K562 (cell line): ENCODE measurements at regions of chr19 and their contacts with region 1.

Region 1: DNA sequence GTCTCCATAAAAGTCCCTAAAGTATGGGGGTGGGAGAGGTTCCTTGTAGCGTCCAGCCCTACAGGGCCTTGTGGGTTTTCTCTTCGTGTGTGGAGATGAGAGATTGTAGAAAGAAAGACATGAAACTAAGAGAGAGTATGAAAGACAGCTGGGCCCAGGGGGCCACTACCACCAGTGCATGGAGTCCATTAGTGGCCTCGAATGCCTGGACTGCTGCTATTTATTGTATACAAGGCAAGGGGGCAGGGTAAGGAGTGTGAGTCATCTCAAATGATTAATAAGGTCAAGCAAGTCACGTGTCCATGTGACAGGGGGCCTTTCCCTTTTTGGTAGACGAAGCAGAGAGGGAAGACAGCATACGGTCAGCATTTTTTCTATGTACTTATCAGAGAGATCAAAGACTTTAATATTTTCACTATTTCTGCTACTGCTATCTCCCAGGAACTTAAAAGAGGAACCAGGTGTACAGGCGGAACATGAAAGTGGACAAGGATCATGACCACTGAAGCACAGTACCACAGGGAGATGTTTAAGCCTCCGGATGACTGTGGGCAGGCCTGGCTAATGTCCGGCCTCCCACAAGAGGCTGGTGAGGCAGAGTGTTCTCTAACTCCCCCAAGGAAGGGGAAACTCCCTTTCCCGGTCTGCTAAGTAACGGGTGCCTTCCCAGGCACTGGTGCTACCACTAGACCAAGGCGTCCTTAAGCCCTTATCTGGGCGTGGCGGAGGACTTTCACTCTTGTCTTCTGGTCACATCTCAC is 25.5 kb downstream of the FGF21 start:
- DNase-seq: peak; percentile 31 to 86 (median 39)
- ATAC-seq: peak; percentile 76
- H3K4me3 ChIP-seq: no peak overlapping the region
- H3K27ac ChIP-seq: peak overlapping the region; percentile 89
- H3K4me1 ChIP-seq: peaks cover 24 to 34% of the 10 kb centered on the region in 2 experiments
- H3K27me3 ChIP-seq: no peaks in the 10 kb centered on the region
- CTCF ChIP-seq: no peak
- EP300 ChIP-seq: peak; percentile 32; the same call in 1 of the 2 replicates
- POLR2A ChIP-seq: peak; percentile 48
- RAD21 ChIP-seq: no peak

Region 2: DNA sequence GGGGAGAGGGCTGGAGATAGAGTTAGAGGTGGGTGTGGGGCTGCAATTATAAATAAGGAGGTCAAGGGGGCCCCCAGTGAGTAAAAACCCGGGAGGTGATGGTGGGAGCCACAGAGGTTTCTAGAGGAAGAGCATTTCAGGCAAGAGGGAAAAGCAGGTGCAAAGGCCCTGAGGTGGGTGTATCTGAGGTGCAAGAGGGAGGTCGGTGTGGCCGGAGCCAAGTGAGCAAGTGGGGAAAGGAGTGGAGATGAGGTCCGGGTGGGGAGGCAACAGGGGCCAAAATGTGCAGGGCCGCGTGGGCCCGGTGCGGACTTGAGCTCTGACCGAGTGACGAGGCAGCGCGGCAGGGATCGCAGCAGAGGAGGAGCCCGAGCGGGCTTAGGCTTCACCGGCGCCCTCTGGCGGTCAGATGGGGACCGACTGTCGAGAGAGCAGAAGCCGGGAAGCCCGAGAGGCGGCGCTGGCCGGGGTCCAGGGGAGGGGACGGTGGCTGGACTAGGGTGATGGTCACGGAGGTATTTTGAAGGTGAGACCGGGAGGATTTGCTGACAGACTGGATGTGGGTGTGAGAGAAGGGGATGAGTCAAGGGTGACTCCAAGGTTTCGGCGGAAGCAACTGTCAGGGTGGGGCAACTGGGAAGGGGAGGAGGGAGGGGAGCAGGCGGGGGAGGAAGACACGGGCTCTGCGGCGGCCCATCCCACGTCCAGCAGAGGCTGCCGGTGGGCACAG is 192.0 kb before region 1 on chr19:
- CTCF ChIA-PET with region 1: no interaction called
- POLR2A ChIA-PET with region 1: no interaction called
- in situ Hi-C with region 1: no loop called
- intact Hi-C with region 1: loop called (anchors 5 kb)
- DNase-seq: peak; percentile 93 to 96 (median 94)
- ATAC-seq: peak; percentile 92
- H3K4me3 ChIP-seq: peak overlapping the region; percentile 37
- H3K27ac ChIP-seq: peak overlapping the region; percentile 70; the same call in 2 of the 3 replicates
- H3K4me1 ChIP-seq: peaks cover 3 to 30% of the 10 kb centered on the region in 2 experiments; a peak in 2 of 5 replicates
- H3K27me3 ChIP-seq: no peaks in the 10 kb centered on the region
- CTCF ChIP-seq: peak; percentile 98 to 99 (median 99)
- EP300 ChIP-seq: no peak; the same call in none of the 2 replicates
- POLR2A ChIP-seq: peak; percentile 60
- RAD21 ChIP-seq: peak; percentile 60 to 77

Region 3: DNA sequence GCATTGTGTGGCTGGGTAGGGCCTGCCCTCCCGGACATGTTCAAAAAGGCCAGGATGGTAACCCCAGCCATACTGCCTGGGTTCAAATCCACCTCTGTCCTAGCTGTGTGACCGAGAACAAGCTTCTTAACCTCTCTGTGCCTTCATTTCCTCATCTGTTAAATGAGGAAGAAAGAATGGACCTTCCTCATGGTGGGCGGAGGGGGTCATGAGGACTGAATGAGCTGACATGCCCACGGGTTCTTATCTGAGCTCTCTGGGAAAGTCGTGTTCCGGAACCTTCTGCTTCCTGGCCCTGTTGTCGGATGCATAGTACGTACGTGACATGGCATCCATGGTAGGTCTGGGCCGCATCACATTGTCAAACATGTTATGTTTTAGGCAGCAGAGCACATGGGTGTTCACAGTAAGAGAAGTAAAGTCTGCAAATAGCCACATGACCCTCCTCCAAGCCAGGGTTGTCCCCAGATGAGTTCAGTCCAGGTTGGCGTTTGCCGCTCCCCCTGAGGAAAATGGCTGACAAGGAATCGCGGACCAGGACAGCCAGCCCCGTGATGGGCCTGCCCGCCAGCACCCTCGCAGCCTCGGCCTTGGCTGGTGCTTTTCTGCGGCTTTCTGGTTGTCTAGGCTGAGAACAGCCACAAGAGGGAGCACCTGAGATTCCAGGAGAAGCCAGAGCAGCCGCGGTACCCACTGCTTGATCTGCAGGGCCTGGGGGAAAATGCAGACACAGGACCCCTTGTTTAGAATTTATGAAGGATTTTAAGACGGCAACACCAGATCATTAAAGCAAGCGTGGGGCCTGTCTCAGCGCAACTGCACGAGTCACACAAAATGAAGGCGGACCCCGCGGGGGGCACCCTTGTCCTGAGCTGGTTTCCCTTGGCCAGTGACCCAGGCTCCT is 105.6 kb before region 1 on chr19:
- CTCF ChIA-PET with region 1: interaction called, 6 read pairs
- POLR2A ChIA-PET with region 1: interaction called, 6 read pairs
- in situ Hi-C with region 1: no loop called
- intact Hi-C with region 1: loop called (anchors 1 kb)
- DNase-seq: peak; percentile 86 to 88 (median 86)
- ATAC-seq: peak; percentile 92
- H3K4me3 ChIP-seq: no peak overlapping the region
- H3K27ac ChIP-seq: no peak overlapping the region
- H3K4me1 ChIP-seq: peaks cover 13 to 64% of the 10 kb centered on the region in 2 experiments; a peak in 4 of 5 replicates
- H3K27me3 ChIP-seq: no peaks in the 10 kb centered on the region
- CTCF ChIP-seq: peak; percentile 90 to 92 (median 92)
- EP300 ChIP-seq: no peak
- POLR2A ChIP-seq: no peak
- RAD21 ChIP-seq: peak; percentile 80 to 88

Region 4: GRCh38 chr19:48755084-48755641 is 25.6 kb before region 1 on chr19 and contains the start of gene FGF21:
- CTCF ChIA-PET with region 1: no interaction called
- POLR2A ChIA-PET with region 1: interaction called, 4 read pairs
- in situ Hi-C with region 1: no loop called
- intact Hi-C with region 1: loop called (anchors 2 kb)
- DNase-seq: peak in 1 of 4 experiments; percentile 58
- ATAC-seq: peak; percentile 67
- H3K4me3 ChIP-seq: no peak within 1 kb of the TSS
- H3K27ac ChIP-seq: peak within 1 kb of the TSS; percentile 93
- H3K4me1 ChIP-seq: peaks cover 25 to 71% of the 10 kb centered on the region in 2 experiments
- H3K27me3 ChIP-seq: no peaks in the 10 kb centered on the region
- CTCF ChIP-seq: no peak
- EP300 ChIP-seq: peak; percentile 41; the same call in 1 of the 2 replicates
- POLR2A ChIP-seq: no peak
- RAD21 ChIP-seq: peak in 1 of 2 experiments; percentile 13; a peak in 1 of 4 replicates
- polyA plus RNA-seq, gene FGF21: 0.04 TPM in 1 of 2 experiments, not detected in the other

Region 5: DNA sequence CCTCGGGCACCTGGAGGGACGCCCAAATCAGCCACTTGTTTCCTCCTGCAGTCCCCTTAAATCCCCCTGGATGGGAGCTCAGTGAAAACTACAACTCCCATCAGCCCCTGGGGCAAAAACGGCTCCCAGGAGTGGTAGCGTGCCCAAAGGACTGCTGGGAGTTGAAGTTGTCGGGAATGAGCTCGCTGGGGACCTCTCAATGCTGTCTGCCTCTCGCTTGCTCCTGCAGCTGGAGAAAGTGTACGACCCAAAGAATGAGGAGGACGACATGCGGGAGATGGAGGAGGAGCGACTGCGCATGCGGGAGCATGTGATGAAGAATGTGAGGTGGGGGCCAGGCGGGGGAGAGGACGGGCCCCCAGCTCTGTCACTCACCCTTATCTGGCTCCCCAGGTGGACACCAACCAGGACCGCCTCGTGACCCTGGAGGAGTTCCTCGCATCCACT is 138.0 kb after region 1 on chr19:
- CTCF ChIA-PET with region 1: no interaction called
- POLR2A ChIA-PET with region 1: no interaction called
- in situ Hi-C with region 1: no loop called
- intact Hi-C with region 1: no loop called
- DNase-seq: peak; percentile 72 to 81 (median 78)
- ATAC-seq: peak; percentile 93
- H3K4me3 ChIP-seq: no peak overlapping the region
- H3K27ac ChIP-seq: no peak overlapping the region
- H3K4me1 ChIP-seq: peaks cover 0 to 13% of the 10 kb centered on the region in 2 experiments; a peak in 3 of 5 replicates
- H3K27me3 ChIP-seq: no peaks in the 10 kb centered on the region
- CTCF ChIP-seq: no peak
- EP300 ChIP-seq: 0 out of 2 replicates have a peak, but pooled peaks have one; percentile 26
- POLR2A ChIP-seq: no peak
- RAD21 ChIP-seq: no peak

Region 6: DNA sequence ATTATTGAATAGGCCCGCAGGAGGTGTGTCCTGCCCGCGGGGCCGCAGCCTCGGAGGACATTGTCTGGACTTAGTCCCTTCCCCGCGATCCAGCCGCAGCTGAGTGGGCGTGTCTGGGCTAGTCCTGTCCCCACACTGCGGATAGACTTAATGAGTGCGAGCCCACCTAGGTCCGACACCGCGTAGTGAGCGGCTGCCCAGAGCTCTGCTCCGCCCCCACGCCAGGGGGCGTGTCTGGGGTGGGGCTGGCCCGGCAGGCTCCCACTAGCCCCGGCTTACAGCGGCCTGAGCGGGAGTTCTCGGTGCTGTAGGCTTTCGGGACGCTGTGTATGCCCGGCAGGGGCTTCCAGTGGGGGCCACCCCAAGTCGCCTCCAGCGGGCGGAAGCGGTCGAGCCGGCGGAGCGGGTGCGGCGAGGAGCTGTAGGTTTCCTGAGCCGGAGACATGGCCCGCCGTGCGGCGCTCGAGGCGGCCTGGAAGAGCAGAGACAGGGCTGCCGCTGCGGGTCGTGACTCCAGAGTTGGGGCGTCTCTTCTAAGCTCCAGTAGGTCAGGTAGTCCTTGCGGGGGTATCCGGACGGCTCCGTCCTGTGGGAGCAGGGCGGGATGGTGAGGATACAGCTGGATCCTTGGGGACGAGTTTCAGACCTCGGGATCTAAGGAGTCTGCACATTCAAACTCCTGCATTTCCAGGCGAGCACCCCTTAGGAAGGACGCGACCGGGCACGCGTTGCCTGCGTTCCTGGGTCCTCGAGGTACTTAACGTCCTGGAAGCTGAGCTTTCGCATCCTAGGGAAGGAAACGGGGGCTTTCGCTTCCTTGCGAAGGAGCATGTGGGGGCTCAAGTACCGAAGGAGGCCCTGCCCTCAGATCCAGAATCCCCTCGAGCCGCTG is 275.4 kb after region 1 on chr19:
- CTCF ChIA-PET with region 1: no interaction called
- POLR2A ChIA-PET with region 1: no interaction called
- in situ Hi-C with region 1: no loop called
- intact Hi-C with region 1: no loop called
- DNase-seq: peak; percentile 79 to 91 (median 90)
- ATAC-seq: peak; percentile 97
- H3K4me3 ChIP-seq: peak overlapping the region; percentile 49
- H3K27ac ChIP-seq: no peak overlapping the region
- H3K4me1 ChIP-seq: peaks cover 2 to 29% of the 10 kb centered on the region in 2 experiments; a peak in 3 of 5 replicates
- H3K27me3 ChIP-seq: peaks cover 13 to 46% of the 10 kb centered on the region in 2 experiments; a peak in 3 of 5 replicates
- CTCF ChIP-seq: peak in 2 of 3 experiments; percentile 18 to 34; a peak in 2 of 6 replicates
- EP300 ChIP-seq: no peak
- POLR2A ChIP-seq: no peak
- RAD21 ChIP-seq: no peak; a peak in 1 of 4 replicates

Region 7: GRCh38 chr19:49224856-49225255 is 444.0 kb after region 1 on chr19:
- CTCF ChIA-PET with region 1: no interaction called
- POLR2A ChIA-PET with region 1: no interaction called
- in situ Hi-C with region 1: no loop called
- intact Hi-C with region 1: loop called (anchors 10 kb)
- DNase-seq: peak; percentile 52 to 73 (median 57)
- ATAC-seq: peak; percentile 89
- H3K4me3 ChIP-seq: no peak overlapping the region
- H3K27ac ChIP-seq: no peak overlapping the region
- H3K4me1 ChIP-seq: peaks cover 4% of the 10 kb centered on the region in 2 experiments; a peak in 2 of 5 replicates
- H3K27me3 ChIP-seq: no peaks in the 10 kb centered on the region; a peak in 1 of 5 replicates
- CTCF ChIP-seq: peak; percentile 76 to 83 (median 77)
- EP300 ChIP-seq: no peak
- POLR2A ChIP-seq: no peak
- RAD21 ChIP-seq: peak; percentile 58 to 86